ENCODE measurements at regions of chr12 and their contacts with region 1.

Region 1: GRCh38 chr12:62934799-62935674 is at the start of gene PPM1H:
- DNase-seq: peak; percentile 86
- ATAC-seq: peak; percentile 95
- H3K4me3 ChIP-seq: peak within 1 kb of the TSS; percentile 90 to 97 (median 97)
- H3K27ac ChIP-seq: peak within 1 kb of the TSS; percentile 74
- H3K4me1 ChIP-seq: peaks cover 42% of the 10 kb centered on the region
- H3K27me3 ChIP-seq: no peaks in the 10 kb centered on the region; a peak in 1 of 5 replicates
- CTCF ChIP-seq: peak; percentile 98
- EP300 ChIP-seq: peak; percentile 37 to 62; a peak in 2 of 4 replicates
- POLR2A ChIP-seq: peak; percentile 80 to 91
- RAD21 ChIP-seq: peak; percentile 93
- total RNA-seq, gene PPM1H: 38.1 and 42.0 TPM in 2 replicates

Region 2: DNA sequence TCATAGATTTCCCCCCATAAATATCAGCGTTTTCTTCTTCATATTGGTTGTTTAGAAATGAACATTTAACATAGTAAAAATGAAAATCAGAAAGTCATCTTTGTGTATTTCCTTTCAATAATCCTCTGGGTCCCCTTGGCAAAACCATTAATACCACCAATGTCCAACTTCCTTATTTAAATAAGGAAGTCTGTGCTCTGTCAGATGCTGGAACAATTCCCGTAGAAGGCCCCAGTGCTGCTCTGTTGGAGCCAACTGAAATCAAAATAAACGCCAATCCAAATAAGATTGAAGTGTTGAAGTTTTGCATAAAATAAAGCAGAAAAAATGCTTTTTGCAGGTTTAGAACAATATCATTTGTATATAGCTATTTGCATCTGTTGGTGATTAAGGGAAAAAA is 93.2 kb before region 1 on chr12:
- CTCF ChIA-PET with region 1: no interaction called
- POLR2A ChIA-PET with region 1: interaction called, 5 read pairs
- in situ Hi-C with region 1: no loop called
- intact Hi-C with region 1: loop called (anchors 5 kb)
- DNase-seq: no peak
- ATAC-seq: no peak
- H3K4me3 ChIP-seq: no peak overlapping the region
- H3K27ac ChIP-seq: no peak overlapping the region
- H3K4me1 ChIP-seq: peaks cover 67% of the 10 kb centered on the region
- H3K27me3 ChIP-seq: no peaks in the 10 kb centered on the region
- CTCF ChIP-seq: no peak
- EP300 ChIP-seq: no peak
- POLR2A ChIP-seq: no peak
- RAD21 ChIP-seq: no peak

Region 3: DNA sequence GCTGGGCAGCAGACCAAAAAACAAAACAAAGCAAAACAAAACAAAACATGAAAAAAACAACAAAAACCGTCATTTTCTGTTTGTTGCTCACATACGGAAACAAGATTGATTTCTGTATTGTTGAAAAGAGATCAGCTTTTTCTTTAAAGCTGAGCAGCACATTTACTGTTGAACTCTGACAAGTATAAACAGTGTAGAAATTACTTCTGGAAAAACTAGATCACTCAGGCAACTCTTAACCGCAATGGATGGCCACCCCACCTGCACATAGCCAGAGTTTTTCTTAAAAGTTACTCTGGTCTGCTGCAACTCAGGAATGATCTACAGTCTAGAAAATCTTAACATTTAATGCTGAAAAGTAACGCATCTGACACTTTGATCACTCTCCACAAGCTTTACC is 81.0 kb before region 1 on chr12:
- CTCF ChIA-PET with region 1: no interaction called
- POLR2A ChIA-PET with region 1: no interaction called
- in situ Hi-C with region 1: no loop called
- intact Hi-C with region 1: no loop called
- DNase-seq: no peak
- ATAC-seq: no peak
- H3K4me3 ChIP-seq: no peak overlapping the region
- H3K27ac ChIP-seq: no peak overlapping the region
- H3K4me1 ChIP-seq: peaks cover 19% of the 10 kb centered on the region
- H3K27me3 ChIP-seq: no peaks in the 10 kb centered on the region
- CTCF ChIP-seq: no peak
- EP300 ChIP-seq: no peak
- POLR2A ChIP-seq: no peak
- RAD21 ChIP-seq: no peak

Region 4: DNA sequence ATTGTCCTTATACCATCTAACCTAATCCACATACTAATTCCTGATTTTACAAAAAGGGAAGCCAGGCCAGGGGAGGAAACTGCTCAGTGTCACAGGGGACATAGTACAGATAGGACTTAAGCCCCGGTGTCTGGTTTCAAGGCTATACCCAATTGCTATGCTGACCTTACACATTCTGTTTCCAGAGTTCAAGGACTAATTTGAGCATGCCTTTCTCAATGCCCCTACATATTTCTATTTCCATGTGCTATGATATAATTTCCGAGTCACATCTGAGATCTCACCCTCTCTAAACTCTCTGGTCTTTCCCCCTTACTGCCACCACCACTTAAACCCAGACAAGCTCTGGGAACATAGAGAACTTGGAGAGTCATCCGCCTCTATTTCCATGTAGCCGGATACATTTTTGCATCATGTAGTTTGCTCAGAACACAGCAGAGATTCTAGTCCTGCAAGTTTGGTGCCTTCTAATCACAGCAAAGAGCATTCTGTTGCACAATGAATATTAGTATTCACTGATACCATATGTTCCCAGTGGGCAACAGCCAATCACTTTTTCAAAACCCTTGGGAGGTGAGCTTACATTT is 34.3 kb before region 1 on chr12:
- CTCF ChIA-PET with region 1: no interaction called
- POLR2A ChIA-PET with region 1: interaction called, 27 read pairs
- in situ Hi-C with region 1: no loop called
- intact Hi-C with region 1: loop called (anchors 2 kb)
- DNase-seq: peak; percentile 91
- ATAC-seq: peak; percentile 94
- H3K4me3 ChIP-seq: no peak overlapping the region
- H3K27ac ChIP-seq: peak overlapping the region; percentile 87
- H3K4me1 ChIP-seq: peaks cover 66% of the 10 kb centered on the region
- H3K27me3 ChIP-seq: no peaks in the 10 kb centered on the region
- CTCF ChIP-seq: no peak
- EP300 ChIP-seq: peak in 1 of 2 experiments; percentile 87; a peak in 2 of 4 replicates
- POLR2A ChIP-seq: no peak; a peak in 1 of 4 replicates
- RAD21 ChIP-seq: no peak

Region 5: DNA sequence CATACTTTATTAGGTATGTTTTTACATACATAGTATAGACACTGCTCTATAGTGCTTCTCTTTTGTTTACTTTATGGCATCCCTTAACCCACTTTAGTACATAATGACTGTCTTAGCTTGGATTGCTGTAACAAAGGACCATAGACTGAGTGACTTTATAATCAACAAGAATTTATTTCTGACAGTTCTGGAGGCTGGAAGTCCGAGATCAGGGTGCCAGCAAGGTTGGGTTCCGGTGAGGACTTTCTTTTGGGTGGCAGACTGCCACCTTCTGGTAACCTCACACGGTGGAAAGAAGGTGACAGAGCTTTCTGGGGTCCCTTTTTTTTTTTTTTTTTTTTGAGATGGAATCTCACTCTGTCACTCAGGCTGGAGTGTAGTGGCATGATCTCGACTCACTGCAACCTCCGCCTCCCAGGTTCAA is 48.6 kb after region 1 on chr12:
- CTCF ChIA-PET with region 1: no interaction called
- POLR2A ChIA-PET with region 1: no interaction called
- in situ Hi-C with region 1: no loop called
- intact Hi-C with region 1: loop called (anchors 5 kb)
- DNase-seq: peak; percentile 57
- ATAC-seq: peak; percentile 91
- H3K4me3 ChIP-seq: no peak overlapping the region
- H3K27ac ChIP-seq: no peak overlapping the region
- H3K4me1 ChIP-seq: peaks cover 15% of the 10 kb centered on the region
- H3K27me3 ChIP-seq: peaks cover 0 to 1% of the 10 kb centered on the region in 2 experiments; a peak in 1 of 5 replicates
- CTCF ChIP-seq: peak; percentile 71
- EP300 ChIP-seq: no peak
- POLR2A ChIP-seq: no peak
- RAD21 ChIP-seq: peak; percentile 59; the same call in 1 of the 2 replicates

Measured in HepG2 (cell line).